PC-9 (cell line): ENCODE measurements at regions of chr3 and their contacts with region 1.

Region 1: GRCh38 chr3:141123677-141124410 is 72.7 kb downstream of the SPSB4 start:
- DNase-seq: no peak
- H3K4me3 ChIP-seq: no peak overlapping the region
- H3K27ac ChIP-seq: no peak overlapping the region
- H3K4me1 ChIP-seq: no peaks in the 10 kb centered on the region
- H3K27me3 ChIP-seq: peaks cover 50% of the 10 kb centered on the region
- CTCF ChIP-seq: no peak

Region 2: GRCh38 chr3:141084250-141084649 is 39.6 kb before region 1 on chr3:
- CTCF ChIA-PET with region 1: no interaction called
- POLR2A ChIA-PET with region 1: interaction called, 10 read pairs
- intact Hi-C with region 1: no loop called
- DNase-seq: no peak
- H3K4me3 ChIP-seq: no peak overlapping the region
- H3K27ac ChIP-seq: no peak overlapping the region
- H3K4me1 ChIP-seq: no peaks in the 10 kb centered on the region
- H3K27me3 ChIP-seq: peaks cover 10% of the 10 kb centered on the region; the same call in 1 of the 2 replicates
- CTCF ChIP-seq: no peak

Region 3: GRCh38 chr3:141477224-141477623 is 353.4 kb after region 1 on chr3:
- CTCF ChIA-PET with region 1: no interaction called
- POLR2A ChIA-PET with region 1: no interaction called
- intact Hi-C with region 1: no loop called
- DNase-seq: peak; percentile 62 to 84
- H3K4me3 ChIP-seq: no peak overlapping the region
- H3K27ac ChIP-seq: peak overlapping the region; percentile 26
- H3K4me1 ChIP-seq: peaks cover 20% of the 10 kb centered on the region
- H3K27me3 ChIP-seq: no peaks in the 10 kb centered on the region
- CTCF ChIP-seq: no peak